AG04450 (cell line): ENCODE measurements at regions of chr7 and their contacts with region 1.

Region 1: DNA sequence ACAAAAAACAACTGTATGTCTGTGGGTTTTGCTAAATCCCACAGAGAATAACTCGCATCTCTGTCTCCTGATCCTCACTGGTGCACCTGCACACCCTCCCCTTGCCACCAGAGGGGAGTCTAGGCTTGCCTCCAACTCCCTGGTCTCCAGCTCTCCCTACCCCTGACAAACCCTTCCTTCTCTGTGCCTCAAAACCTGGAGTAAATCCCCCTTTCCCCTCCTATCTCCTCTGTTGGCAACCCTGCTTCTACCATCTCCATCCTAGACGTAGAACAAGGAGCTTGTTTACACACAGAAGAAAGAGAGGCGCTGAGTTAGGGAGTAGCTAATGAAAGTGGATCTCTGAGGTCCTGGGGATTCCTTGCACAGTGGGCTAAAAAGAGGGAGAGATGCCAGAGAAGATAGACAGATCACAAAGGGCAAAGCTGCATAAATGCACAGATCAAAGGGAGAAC is 6.0 kb downstream of the MBLAC1 start:
- DNase-seq: no peak
- H3K4me3 ChIP-seq: no peak overlapping the region
- H3K27ac ChIP-seq: no peak overlapping the region
- H3K27me3 ChIP-seq: no peaks in the 10 kb centered on the region
- CTCF ChIP-seq: peak; percentile 98

Region 2: DNA sequence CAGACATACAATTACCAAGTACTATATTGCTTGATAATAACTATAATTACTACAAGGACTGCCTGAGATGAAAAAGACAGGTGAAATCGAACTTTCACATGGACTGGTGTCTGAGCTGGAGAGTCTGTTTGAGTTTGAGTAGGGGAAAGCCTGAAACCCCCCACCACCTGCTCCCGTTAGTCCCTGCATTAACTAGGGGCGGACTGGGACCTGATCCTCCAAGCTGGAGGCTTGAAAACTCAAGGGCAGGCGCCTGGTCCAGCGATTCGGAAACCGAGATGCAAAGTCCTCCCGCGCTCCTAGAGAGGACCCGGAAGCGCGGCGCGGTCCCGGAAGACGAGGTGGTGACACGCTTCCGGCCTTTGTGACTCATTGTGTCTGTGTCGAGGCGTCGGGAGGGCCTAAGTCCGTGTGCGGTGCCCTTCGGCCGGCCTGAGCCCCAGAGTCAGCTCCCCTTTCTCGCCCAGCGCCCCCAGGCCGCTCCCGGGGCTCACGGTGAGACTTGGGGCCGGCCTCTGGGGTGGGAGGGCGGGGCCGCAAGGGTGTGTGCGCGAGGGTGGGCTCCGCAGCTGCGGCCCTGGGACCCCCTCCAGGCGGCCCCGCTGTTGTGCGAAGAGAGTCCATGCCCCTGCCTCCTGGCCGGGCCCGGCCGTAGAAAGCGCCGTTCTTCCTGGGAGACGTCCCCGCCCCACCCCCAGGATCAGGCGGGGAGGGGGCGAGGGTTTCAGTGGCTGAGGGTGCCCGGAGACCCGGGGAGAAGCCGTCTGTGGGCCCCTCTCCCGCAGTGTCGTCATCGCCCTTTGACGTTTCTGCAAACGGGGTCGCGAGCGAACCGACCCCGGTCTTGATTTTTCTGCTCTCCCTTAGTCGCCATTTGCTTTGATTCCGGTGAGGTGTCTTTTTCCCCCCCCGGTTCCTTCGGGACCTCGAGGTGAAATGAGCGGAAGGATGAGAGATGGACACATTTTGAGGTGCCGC is 117.2 kb before region 1 on chr7 and contains the start of gene ZKSCAN1:
- CTCF ChIA-PET with region 1: interaction called, 11 read pairs
- POLR2A ChIA-PET with region 1: no interaction called
- DNase-seq: peak; percentile 81
- H3K4me3 ChIP-seq: peak within 1 kb of the TSS; percentile 71
- H3K27ac ChIP-seq: peak within 1 kb of the TSS; percentile 78
- H3K27me3 ChIP-seq: peaks cover 3% of the 10 kb centered on the region
- CTCF ChIP-seq: no peak
- polyA plus RNA-seq, gene ZKSCAN1: 36.8 and 42.7 TPM in 2 replicates

Region 3: DNA sequence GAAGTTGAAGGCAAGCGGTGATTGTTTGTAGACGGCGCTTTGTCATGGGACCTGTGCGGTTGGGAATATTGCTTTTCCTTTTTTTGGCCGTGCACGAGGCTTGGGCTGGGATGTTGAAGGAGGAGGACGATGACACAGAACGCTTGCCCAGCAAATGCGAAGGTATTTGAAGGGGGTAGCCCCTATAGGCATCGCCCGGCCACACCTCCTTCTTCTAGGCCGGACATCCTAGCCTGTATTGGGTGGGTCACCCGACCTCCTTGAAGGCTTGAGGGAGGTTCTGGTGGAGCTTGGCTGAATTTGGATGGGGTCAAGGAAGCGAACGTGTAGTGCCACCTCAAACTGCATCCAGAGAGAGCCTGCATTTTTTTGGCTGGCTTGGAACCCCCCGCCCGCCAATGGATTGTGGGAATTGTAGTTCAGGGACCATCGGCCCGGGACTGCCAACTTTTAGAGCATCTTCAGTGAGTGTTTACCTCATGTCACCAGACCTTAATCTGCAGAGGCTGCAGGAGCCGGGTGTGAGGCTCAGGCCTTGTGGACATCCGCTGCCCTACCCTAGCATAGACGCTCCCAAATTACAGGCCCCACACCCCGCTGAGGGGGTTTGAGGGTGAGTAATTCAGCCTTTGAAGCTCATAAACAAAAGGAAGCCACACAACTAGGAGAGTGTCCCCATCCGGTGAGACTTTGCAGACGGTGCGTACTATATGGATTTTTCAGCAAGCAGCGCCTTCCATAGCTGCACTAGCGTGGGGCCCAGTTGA is 12.8 kb before region 1 on chr7:
- CTCF ChIA-PET with region 1: interaction called, 11 read pairs
- POLR2A ChIA-PET with region 1: interaction called, 3 read pairs
- DNase-seq: no peak
- H3K4me3 ChIP-seq: peak overlapping the region; percentile 98
- H3K27ac ChIP-seq: peak overlapping the region; percentile 74
- H3K27me3 ChIP-seq: no peaks in the 10 kb centered on the region
- CTCF ChIP-seq: no peak

Region 4: DNA sequence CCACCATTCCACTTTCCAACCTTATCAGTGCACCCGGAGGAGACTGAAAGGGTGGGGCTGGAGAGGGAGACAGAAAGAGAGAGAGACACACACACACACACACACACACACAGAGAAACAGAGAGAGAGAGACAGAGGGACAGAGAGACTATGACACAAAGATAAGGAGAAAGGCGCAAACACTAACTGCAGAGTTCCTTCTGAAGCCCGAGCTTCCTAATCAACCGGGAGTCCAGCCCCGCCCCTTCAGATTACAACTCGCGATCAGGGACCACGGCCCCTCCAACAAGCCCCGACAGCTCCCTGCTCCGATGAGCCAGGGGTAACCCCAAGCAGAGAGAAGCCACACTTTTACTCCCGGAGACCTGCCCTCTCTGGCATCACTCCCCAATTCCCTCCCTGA is 35.2 kb after region 1 on chr7:
- CTCF ChIA-PET with region 1: interaction called, 12 read pairs
- POLR2A ChIA-PET with region 1: no interaction called
- DNase-seq: no peak
- H3K4me3 ChIP-seq: peak overlapping the region; percentile 63
- H3K27ac ChIP-seq: no peak overlapping the region
- H3K27me3 ChIP-seq: peaks cover 2% of the 10 kb centered on the region
- CTCF ChIP-seq: no peak

Region 5: DNA sequence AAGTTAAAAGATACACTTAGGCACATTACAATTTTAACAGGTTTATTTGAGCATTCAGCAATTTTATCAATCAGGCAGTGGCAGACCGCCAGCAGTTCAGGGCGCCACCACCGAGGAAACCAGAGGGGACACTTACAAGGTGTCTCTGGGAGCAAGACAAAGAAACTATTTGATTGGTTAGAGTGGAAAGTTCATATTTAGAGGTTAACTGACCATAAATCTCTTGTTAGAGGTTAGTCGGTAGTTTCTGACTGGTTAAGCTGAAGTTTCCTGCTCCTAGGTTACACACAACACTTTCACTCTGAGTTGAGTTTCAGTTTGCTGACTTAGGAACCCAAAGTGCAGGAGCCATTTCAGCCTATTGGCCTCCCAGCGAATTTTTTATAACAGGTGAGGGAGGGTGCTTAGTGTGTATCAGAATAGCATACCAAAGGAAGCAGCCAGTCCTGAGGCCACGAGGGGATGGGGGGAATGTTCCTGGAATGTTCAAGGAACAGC is 76.2 kb after region 1 on chr7:
- CTCF ChIA-PET with region 1: interaction called, 32 read pairs
- POLR2A ChIA-PET with region 1: no interaction called
- DNase-seq: no peak
- H3K4me3 ChIP-seq: no peak overlapping the region
- H3K27ac ChIP-seq: no peak overlapping the region
- H3K27me3 ChIP-seq: peaks cover 12% of the 10 kb centered on the region
- CTCF ChIP-seq: no peak

Region 6: DNA sequence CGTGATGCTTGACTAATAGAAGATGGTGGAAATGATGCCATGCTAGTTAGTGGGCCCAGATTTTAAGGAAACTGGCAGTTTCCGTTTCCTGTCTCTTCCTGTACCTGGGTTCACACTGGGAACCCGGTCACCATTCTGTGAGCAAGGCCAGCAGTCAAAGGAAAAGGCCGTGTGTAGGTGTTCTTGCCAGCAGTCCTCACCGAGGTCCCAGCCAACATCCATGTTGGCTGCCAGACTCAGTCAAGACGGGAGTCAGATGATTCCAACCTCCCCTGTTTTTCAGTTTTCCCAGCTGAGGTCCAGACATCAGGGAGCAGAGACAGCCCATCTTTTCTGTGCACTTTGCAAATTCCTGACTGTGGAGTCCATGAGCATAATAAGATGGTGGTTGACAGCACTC is 210.0 kb after region 1 on chr7:
- CTCF ChIA-PET with region 1: interaction called, 13 read pairs
- POLR2A ChIA-PET with region 1: no interaction called
- DNase-seq: no peak
- H3K4me3 ChIP-seq: no peak overlapping the region
- H3K27ac ChIP-seq: no peak overlapping the region
- H3K27me3 ChIP-seq: no peaks in the 10 kb centered on the region
- CTCF ChIP-seq: no peak